ENCODE measurements at regions of chr19 and their contacts with region 1.

Region 1: DNA sequence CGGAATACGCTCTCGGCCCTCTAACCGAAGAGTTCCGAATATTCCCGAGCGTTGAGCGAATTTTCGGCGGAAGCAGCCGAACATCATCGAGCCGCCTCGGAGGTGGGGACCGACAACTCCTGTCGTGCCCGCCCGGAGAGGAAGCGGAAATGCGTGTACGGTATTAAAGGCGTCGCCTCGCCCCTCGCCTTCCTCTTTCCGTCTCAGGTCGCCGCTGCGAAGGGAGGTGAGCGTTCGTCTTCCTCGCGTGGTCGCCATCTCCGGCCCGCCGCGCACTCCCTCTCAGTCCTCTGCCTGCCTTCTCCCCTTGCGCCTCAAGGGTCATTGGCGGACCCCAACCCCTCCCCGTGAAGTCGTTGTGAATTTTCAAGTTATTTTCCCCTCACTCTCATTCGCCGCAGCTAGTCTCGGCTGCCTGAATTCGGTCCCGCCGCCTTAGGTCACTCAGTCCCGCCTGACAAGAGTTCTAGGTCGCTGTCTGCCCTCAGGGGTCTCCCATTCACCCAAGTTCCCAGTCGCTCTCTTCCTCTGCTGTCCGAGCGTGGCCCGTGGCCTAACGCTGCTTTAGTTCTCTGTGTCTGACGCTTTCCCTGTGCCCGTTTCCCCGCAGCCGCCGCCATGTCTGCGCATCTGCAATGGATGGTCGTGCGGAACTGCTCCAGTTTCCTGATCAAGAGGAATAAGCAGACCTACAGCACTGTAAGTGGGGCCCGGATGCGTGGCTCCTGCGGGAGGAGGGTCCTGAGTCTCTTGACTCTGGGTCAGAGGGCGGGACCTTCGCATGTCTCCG is at the start of gene RPL28:
- DNase-seq: peak; percentile 96
- H3K4me3 ChIP-seq: peak within 1 kb of the TSS; percentile 74 to 98 (median 81)
- H3K27ac ChIP-seq: peak within 1 kb of the TSS; percentile 89
- H3K4me1 ChIP-seq: peaks cover 32% of the 10 kb centered on the region
- H3K27me3 ChIP-seq: no peaks in the 10 kb centered on the region
- CTCF ChIP-seq: no peak
- total RNA-seq, gene RPL28: 279 to 1,713 TPM

Region 2: GRCh38 chr19:55289117-55289796 is 96.7 kb before region 1 on chr19:
- CTCF ChIA-PET with region 1: no interaction called
- dilution Hi-C with region 1: no loop called
- in situ Hi-C with region 1: loop called in 1 of 2 experiments (anchors 10 kb)
- intact Hi-C with region 1: loop called (anchors 2 kb)
- DNase-seq: no peak
- H3K4me3 ChIP-seq: no peak overlapping the region
- H3K27ac ChIP-seq: no peak overlapping the region
- H3K4me1 ChIP-seq: no peaks in the 10 kb centered on the region
- H3K27me3 ChIP-seq: no peaks in the 10 kb centered on the region
- CTCF ChIP-seq: no peak

Region 3: GRCh38 chr19:55339048-55339888 is 46.7 kb before region 1 on chr19 and contains the start of gene KMT5C:
- CTCF ChIA-PET with region 1: interaction called, 6 read pairs
- dilution Hi-C with region 1: no loop called
- in situ Hi-C with region 1: no loop called
- intact Hi-C with region 1: loop called (anchors 2 kb)
- DNase-seq: peak; percentile 100
- H3K4me3 ChIP-seq: peak within 1 kb of the TSS; percentile 48 to 83 (median 61)
- H3K27ac ChIP-seq: peak within 1 kb of the TSS; percentile 99
- H3K4me1 ChIP-seq: peaks cover 48% of the 10 kb centered on the region
- H3K27me3 ChIP-seq: no peaks in the 10 kb centered on the region
- CTCF ChIP-seq: peak in 1 of 2 donors; percentile 46
- total RNA-seq, gene KMT5C: 15.6 to 18.8 TPM

Region 4: GRCh38 chr19:55407800-55408532 is 22.0 kb after region 1 on chr19:
- CTCF ChIA-PET with region 1: no interaction called
- dilution Hi-C with region 1: no loop called
- in situ Hi-C with region 1: no loop called
- intact Hi-C with region 1: loop called (anchors 2 kb)
- DNase-seq: peak; percentile 98
- H3K4me3 ChIP-seq: peak overlapping the region; percentile 75 to 94 (median 81)
- H3K27ac ChIP-seq: peak overlapping the region; percentile 94
- H3K4me1 ChIP-seq: peaks cover 29% of the 10 kb centered on the region
- H3K27me3 ChIP-seq: no peaks in the 10 kb centered on the region
- CTCF ChIP-seq: no peak

Region 5: DNA sequence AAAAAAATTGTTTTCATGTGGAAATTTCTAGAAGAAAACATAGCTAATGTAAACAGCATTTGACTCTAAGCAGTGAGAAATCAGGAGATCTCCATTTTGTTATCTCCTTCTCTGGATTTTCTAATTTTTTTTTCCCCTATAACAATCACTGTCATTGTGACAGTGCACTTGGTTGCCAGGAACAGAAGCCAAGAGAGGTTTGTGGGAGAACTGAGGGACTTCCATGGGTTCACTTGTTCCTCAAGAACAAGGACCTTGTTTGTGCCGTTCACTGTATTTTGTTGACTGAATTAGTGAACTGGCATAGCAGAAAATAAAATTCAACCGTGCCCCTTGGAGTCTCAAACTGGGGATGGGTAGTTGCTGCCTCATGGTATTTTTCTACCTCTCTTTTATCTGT is 40.1 kb after region 1 on chr19:
- CTCF ChIA-PET with region 1: no interaction called
- dilution Hi-C with region 1: no loop called
- in situ Hi-C with region 1: no loop called
- intact Hi-C with region 1: no loop called
- DNase-seq: no peak
- H3K4me3 ChIP-seq: no peak overlapping the region
- H3K27ac ChIP-seq: no peak overlapping the region
- H3K4me1 ChIP-seq: no peaks in the 10 kb centered on the region
- H3K27me3 ChIP-seq: no peaks in the 10 kb centered on the region
- CTCF ChIP-seq: no peak

Region 6: DNA sequence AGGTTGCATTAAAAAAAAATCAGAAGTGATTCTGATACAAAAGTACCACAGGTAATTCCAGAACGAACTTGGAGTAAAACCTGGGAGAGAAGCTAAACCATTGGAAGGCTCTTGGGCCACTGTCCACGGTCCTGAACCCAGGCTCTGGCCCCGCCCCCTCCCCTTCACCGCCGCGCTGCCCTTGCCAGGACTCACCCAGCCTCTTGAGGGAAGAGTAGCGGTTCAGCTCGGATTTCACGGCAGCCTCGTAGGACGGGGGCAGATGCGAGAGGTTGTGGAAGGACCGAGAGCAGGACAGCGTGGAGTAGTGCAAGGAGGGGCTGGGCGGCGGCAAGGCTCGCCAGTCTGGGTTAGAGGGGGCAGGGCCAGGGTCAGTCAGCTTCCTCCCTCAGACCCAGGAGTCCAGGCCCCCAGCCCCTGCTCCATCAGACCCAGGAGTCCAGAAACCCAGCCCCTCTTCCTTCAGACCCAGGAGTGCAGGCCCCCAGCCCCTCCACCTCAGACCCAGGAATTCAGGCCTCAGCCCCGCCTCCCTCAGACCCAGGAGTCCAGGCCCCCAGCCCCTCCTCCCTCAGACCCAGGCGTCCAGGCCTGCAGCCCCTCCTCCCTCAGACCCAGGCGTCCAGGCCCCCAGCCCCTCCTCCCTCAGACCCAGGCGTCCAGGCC is 51.6 kb after region 1 on chr19:
- CTCF ChIA-PET with region 1: no interaction called
- dilution Hi-C with region 1: no loop called
- in situ Hi-C with region 1: no loop called
- intact Hi-C with region 1: no loop called
- DNase-seq: peak; percentile 64
- H3K4me3 ChIP-seq: no peak overlapping the region
- H3K27ac ChIP-seq: no peak overlapping the region
- H3K4me1 ChIP-seq: peaks cover 5% of the 10 kb centered on the region
- H3K27me3 ChIP-seq: peaks cover 21% of the 10 kb centered on the region
- CTCF ChIP-seq: no peak

Region 7: DNA sequence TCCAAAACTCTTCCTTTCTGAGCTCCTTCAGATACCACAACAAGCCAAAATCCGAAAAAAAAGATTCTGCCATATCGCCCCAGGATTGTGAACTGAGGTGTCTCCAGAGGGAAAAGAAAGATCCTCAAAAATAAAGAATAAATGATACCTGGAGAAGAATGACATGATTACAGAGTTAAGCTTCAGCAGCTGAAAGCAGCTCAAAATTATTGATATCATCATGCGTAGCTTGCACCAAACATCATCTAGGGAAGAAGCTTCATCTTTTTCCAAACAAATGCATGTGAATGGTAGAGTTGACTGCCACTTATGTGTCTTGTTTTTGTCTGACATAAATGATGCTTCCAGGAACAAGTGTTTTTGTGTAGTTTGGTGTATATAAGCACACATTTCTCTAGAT is 352.4 kb after region 1 on chr19 and contains the start of gene NLRP9:
- CTCF ChIA-PET with region 1: no interaction called
- dilution Hi-C with region 1: no loop called
- in situ Hi-C with region 1: no loop called
- intact Hi-C with region 1: no loop called
- DNase-seq: no peak
- H3K4me3 ChIP-seq: no peak within 1 kb of the TSS
- H3K27ac ChIP-seq: no peak within 1 kb of the TSS
- H3K4me1 ChIP-seq: no peaks in the 10 kb centered on the region
- H3K27me3 ChIP-seq: no peaks in the 10 kb centered on the region
- CTCF ChIP-seq: no peak
- total RNA-seq, gene NLRP9: not detected